OCI-LY7 (cell line): ENCODE measurements at regions of chr15 and their contacts with region 1.

Region 1: DNA sequence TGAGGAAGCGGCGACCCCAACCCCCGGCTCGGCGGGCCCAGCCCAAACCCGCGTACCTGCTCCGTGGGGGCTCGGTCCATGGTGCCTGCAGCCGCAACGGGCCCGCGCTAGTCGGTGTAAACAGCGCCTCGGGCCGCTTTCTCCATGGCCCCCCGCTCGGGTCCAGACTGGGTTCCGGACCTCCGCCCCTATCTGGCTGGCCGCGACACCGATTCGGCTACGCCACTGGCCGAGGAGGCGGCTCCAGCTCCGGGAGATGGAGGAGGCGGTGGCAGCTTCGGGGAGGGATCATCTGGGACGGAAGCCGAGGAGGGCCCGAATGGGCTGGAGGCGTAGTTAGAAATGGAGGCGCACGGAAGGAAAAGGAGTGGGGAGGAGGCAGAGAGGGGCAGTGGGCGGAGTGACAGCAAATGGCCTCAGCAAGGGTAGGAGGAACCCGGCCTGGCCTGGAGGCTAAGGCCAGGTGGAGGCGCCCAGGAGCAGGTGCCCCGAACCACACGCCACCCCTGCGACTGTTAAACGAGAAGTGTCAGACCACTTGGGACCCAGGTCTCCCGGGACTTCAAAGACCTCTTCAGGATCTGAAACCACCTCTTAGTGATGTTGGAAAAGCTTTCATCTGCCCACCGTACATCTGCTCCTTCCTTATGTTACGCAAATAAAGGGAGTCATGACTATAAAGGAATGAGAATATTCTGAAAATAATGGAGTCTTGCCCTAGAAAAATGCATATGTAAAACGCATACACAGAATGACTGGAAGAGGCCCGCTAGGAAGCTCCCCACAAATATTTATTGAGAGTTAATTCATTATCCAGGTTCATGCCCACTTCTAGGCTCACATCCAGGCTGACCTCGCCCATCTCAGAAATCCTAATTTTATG is at the start of gene SECISBP2L:
- DNase-seq: peak; percentile 93
- H3K4me3 ChIP-seq: peak within 1 kb of the TSS; percentile 86
- H3K27ac ChIP-seq: peak within 1 kb of the TSS; percentile 62
- H3K4me1 ChIP-seq: peaks cover 23% of the 10 kb centered on the region
- CTCF ChIP-seq: peak; percentile 78
- total RNA-seq, gene SECISBP2L: 13.3 and 15.4 TPM in 2 replicates

Region 2: DNA sequence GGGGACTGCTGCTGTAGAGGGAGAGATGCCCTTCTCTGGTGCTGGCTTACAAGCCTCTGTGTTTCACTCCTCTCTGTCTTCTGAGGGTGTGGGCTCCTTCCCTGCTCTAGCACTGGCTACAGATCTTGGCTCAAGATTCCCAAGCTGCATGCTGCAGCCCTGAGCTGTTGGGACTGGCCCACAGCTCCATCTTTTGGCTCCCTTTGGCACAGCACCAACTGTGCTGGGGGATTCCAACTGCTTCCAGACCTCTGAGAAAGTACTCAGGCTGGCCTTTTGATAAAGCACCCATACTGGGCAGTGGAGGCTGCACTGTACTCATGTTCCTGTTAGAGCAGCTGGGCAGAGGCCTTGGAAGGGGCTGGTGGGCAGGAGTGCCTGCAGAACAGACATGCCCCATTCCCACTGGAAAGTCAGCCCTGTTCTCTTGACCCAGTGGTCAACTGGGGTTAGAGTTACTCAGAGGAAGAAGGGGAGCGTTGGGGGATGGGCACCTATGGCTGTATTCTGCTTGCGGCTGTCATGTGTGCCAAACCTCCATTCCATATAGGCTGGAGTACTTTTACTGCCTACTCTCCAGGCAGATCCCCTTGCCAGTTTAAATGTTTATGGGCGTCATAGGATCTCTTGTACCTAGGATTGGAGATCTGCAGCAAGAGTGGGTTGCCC is 179.3 kb after region 1 on chr15:
- CTCF ChIA-PET with region 1: no interaction called
- POLR2A ChIA-PET with region 1: no interaction called
- intact Hi-C with region 1: no loop called
- DNase-seq: no peak
- H3K4me3 ChIP-seq: no peak overlapping the region
- H3K27ac ChIP-seq: no peak overlapping the region
- H3K4me1 ChIP-seq: no peaks in the 10 kb centered on the region
- CTCF ChIP-seq: 0 out of 2 replicates have a peak, but pooled peaks have one; percentile 28

Region 3: GRCh38 chr15:49620658-49621368 is 574.4 kb after region 1 on chr15 and contains the starts of genes DTWD1 and FAM227B:
- CTCF ChIA-PET with region 1: no interaction called
- POLR2A ChIA-PET with region 1: no interaction called
- intact Hi-C with region 1: loop called (anchors 2 kb)
- DNase-seq: peak; percentile 97
- H3K4me3 ChIP-seq: peak within 1 kb of the TSS; percentile 86
- H3K27ac ChIP-seq: peak within 1 kb of the TSS; percentile 54
- H3K4me1 ChIP-seq: peaks cover 17% of the 10 kb centered on the region
- CTCF ChIP-seq: 0 out of 2 replicates have a peak, but pooled peaks have one; percentile 6
- total RNA-seq, gene DTWD1: 6.8 and 9.4 TPM in 2 replicates
- total RNA-seq, gene FAM227B: 2.9 and 3.2 TPM in 2 replicates